ENCODE measurements at regions of chr17 and their contacts with region 1.

Region 1: GRCh38 chr17:57892146-57892828 is 42.4 kb upstream of the MRPS23 start:
- DNase-seq: peak; percentile 89
- H3K4me3 ChIP-seq: no peak overlapping the region
- H3K27ac ChIP-seq: peak overlapping the region; percentile 72 to 78
- H3K4me1 ChIP-seq: peaks cover 35% of the 10 kb centered on the region
- H3K27me3 ChIP-seq: no peaks in the 10 kb centered on the region
- CTCF ChIP-seq: peak; percentile 82 to 95 (median 90)
- POLR2A ChIP-seq: no peak

Region 2: DNA sequence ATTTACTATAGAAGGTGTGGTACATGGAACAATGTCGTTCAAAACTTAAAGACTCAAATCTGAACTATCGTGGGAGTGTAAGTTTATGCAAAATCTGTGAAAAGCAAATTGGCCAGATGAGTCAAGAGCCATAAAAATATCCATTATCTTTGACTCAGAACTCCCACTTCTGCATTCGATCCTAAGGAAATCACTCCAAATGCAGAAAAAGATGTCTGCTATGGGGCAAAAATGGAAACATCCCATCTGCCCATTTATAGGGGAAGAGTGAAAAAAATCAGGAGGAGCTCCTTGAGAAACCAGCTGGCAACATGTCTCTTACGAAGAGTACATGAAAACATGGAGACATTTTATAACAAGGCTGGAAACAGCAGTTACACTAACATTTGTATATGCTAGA is 103.6 kb before region 1 on chr17:
- intact Hi-C with region 1: no loop called
- DNase-seq: no peak
- H3K4me3 ChIP-seq: no peak overlapping the region
- H3K27ac ChIP-seq: no peak overlapping the region
- H3K4me1 ChIP-seq: no peaks in the 10 kb centered on the region
- H3K27me3 ChIP-seq: no peaks in the 10 kb centered on the region
- CTCF ChIP-seq: no peak
- POLR2A ChIP-seq: no peak

Region 3: DNA sequence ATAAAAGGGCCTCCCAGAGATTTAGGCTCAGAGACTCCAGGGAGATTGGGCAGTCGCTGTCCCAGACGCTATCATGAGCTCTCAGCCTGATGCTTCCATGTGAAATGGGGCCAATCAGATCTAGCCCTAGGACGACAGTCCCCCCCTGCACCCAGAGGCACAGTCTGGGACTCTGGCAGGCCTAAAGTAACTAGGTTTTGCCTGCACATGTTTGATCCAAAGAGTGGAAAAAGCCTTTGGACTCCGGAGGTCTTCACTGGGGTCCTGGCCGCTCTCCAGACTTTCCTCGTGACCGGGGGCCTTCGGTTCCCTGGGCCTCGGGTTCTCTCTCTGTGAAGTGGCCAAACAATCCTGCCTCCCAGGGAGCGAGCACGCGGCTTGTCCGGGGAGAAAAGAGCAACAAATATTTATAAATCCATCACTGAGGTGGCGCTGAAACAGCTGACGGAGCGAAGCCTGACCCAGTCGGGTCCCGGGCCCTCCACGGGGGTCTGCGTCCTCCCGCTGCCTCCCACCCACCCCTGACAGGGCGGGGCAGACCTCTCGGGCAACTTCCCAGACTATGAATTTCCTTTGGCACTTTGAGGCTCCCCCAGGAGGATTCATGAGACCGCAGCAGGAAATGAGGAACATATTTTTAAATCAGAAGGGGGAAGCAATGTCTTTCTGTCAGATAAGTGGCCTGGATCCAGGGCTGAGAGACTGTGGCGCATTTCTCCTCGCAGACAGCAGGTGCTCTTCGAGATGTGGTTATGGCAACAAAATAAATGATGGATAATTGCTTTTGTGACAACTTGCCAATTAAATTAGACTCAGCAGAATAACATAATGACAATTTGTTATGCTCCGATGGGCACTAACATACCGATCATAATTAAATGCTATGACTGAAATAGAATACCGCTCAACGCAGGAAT is 81.3 kb before region 1 on chr17:
- intact Hi-C with region 1: no loop called
- DNase-seq: peak; percentile 56
- H3K4me3 ChIP-seq: peak overlapping the region in 1 of 2 donors; percentile 38
- H3K27ac ChIP-seq: peak overlapping the region; percentile 42 to 78
- H3K4me1 ChIP-seq: peaks cover 13% of the 10 kb centered on the region
- H3K27me3 ChIP-seq: no peaks in the 10 kb centered on the region
- CTCF ChIP-seq: no peak
- POLR2A ChIP-seq: no peak

Region 4: GRCh38 chr17:57955183-57955931 is 63.1 kb after region 1 on chr17 and contains the start of gene CUEDC1:
- intact Hi-C with region 1: loop called (anchors 10 kb)
- DNase-seq: peak; percentile 68
- H3K4me3 ChIP-seq: peak within 1 kb of the TSS; percentile 71 to 75
- H3K27ac ChIP-seq: peak within 1 kb of the TSS; percentile 79 to 87
- H3K4me1 ChIP-seq: peaks cover 3% of the 10 kb centered on the region
- H3K27me3 ChIP-seq: no peaks in the 10 kb centered on the region
- CTCF ChIP-seq: peak in 2 of 3 experiments; percentile 1 to 57
- POLR2A ChIP-seq: no peak
- total RNA-seq, gene CUEDC1: 6.5 to 8.6 TPM

Measured in testis (tissue), 5 donors.